Naive thymus-derived CD4-positive, alpha-beta T cell (primary cell): ENCODE measurements at regions of chr16 and their contacts with region 1.

Region 1: GRCh38 chr16:28531777-28532744 is 6.7 kb downstream of the NUPR1 start:
- DNase-seq: no peak
- ATAC-seq: no peak
- H3K4me3 ChIP-seq: no peak overlapping the region
- H3K4me3 Mint-ChIP-seq: peak overlapping the region in 1 of 10 donors; percentile 23
- H3K27ac ChIP-seq: no peak overlapping the region
- H3K27ac Mint-ChIP-seq: peak overlapping the region in 7 of 9 donors; percentile 63 to 93 (median 66)
- H3K4me1 ChIP-seq: peaks cover 19% of the 10 kb centered on the region in 2 donors
- H3K4me1 Mint-ChIP-seq: peaks cover 18 to 48% (median 38%) of the 10 kb centered on the region in 7 donors
- H3K27me3 ChIP-seq: no peaks in the 10 kb centered on the region
- H3K27me3 Mint-ChIP-seq: no peaks in the 10 kb centered on the region

Region 2: GRCh38 chr16:28491970-28492474 is 40.0 kb before region 1 on chr16 and contains the start of gene CLN3:
- CTCF ChIA-PET with region 1: interaction called, 4 read pairs
- POLR2A ChIA-PET with region 1: interaction called, 72 read pairs
- intact Hi-C with region 1: loop called in 1 of 2 experiments (anchors 1 kb)
- DNase-seq: peak; percentile 73 to 95 (median 93)
- ATAC-seq: peak; percentile 78
- H3K4me3 ChIP-seq: peak within 1 kb of the TSS; percentile 98
- H3K4me3 Mint-ChIP-seq: peak within 1 kb of the TSS; percentile 95 to 100 (median 98)
- H3K27ac ChIP-seq: peak within 1 kb of the TSS; percentile 95
- H3K27ac Mint-ChIP-seq: peak within 1 kb of the TSS; percentile 99 to 100 (median 100)
- H3K4me1 ChIP-seq: peaks cover 31 to 40% of the 10 kb centered on the region in 2 donors
- H3K4me1 Mint-ChIP-seq: peaks cover 41 to 77% (median 62%) of the 10 kb centered on the region in 7 donors
- H3K27me3 ChIP-seq: no peaks in the 10 kb centered on the region
- H3K27me3 Mint-ChIP-seq: no peaks in the 10 kb centered on the region
- total RNA-seq, gene CLN3: 56.5 to 76.3 (median 70.7) TPM

Region 3: DNA sequence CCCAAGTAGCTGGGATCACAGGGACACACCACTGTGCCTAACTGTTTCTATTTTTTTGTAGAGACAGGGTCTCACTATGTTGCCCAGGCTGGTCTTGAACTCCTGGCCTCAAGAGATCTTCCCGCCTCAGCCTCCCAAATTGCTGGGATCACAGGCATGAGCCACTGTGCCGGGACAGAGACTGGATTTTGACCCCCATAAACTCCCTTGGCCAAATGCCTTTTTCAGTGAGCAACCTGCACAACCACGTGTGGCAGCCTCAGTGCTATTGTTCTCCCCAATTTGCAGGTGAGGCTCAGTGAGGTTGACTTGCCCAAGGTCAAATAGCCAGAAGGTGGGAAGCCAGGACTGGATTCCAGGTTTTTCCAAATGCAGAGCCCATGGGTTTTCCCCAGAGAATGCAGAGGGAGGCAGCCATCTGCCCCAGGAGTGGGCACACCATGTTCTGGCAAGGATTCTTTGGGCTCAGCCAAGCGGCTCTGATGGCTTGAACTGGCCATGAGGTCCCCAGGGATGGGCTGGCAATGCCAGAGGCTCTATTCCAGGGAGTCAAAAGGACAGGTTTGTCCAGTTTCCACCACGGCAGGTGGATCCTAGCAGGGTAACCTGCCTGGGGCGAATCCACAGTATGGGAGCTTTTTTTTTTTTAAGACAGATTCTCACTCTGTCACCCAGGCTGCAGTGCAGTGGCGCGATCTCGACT is 27.2 kb before region 1 on chr16:
- CTCF ChIA-PET with region 1: no interaction called
- POLR2A ChIA-PET with region 1: no interaction called
- intact Hi-C with region 1: no loop called
- DNase-seq: no peak
- ATAC-seq: no peak
- H3K4me3 ChIP-seq: no peak overlapping the region
- H3K4me3 Mint-ChIP-seq: no peak overlapping the region
- H3K27ac ChIP-seq: no peak overlapping the region
- H3K27ac Mint-ChIP-seq: no peak overlapping the region
- H3K4me1 ChIP-seq: peaks cover 10% of the 10 kb centered on the region in 2 donors
- H3K4me1 Mint-ChIP-seq: peaks cover 6 to 29% (median 21%) of the 10 kb centered on the region in 7 donors
- H3K27me3 ChIP-seq: no peaks in the 10 kb centered on the region
- H3K27me3 Mint-ChIP-seq: peaks cover 0 to 13% (median 0%) of the 10 kb centered on the region in 5 donors